GM10248 (cell line): ENCODE measurements at regions of chr18 and their contacts with region 1.

Region 1: GRCh38 chr18:49041435-49042245 is 90.9 kb upstream of the SMAD7 start:
- DNase-seq: no peak
- CTCF ChIP-seq: peak; percentile 39

Region 2: DNA sequence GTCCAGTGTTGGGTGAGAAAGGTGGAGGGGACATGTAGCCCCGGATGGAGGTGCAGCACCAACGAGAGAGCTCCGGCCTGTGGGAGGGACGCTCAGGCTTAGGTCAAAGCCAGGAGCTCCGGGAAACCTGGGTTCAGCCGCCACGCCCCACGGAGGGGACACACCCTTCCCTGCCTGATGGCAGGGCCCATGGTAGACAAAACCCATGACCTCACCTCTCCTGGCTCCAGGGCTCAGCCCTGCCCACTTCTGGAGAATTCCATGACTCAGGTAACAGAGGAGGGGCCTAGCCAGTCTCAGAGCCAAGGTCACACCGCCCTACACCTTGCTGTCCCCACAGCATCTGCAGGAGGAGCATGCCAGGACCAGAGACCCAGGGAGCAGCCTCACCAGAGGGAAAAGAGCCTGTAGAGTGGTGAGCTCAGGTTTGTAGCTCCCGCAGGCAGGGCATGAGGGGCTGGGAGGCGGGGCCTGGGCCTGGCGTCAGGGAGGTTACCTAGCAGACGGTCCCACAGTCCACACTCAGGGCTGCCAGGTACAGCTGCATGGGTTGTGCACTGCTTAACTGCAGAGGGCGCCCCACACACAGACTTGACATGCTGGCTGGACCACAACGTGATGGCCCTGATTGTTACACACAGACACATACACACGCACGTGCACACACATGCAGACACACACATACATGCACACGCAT is 20.1 kb before region 1 on chr18:
- CTCF ChIA-PET with region 1: interaction called, 17 read pairs
- POLR2A ChIA-PET with region 1: no interaction called
- DNase-seq: peak; percentile 70
- CTCF ChIP-seq: peak; percentile 51

Region 3: DNA sequence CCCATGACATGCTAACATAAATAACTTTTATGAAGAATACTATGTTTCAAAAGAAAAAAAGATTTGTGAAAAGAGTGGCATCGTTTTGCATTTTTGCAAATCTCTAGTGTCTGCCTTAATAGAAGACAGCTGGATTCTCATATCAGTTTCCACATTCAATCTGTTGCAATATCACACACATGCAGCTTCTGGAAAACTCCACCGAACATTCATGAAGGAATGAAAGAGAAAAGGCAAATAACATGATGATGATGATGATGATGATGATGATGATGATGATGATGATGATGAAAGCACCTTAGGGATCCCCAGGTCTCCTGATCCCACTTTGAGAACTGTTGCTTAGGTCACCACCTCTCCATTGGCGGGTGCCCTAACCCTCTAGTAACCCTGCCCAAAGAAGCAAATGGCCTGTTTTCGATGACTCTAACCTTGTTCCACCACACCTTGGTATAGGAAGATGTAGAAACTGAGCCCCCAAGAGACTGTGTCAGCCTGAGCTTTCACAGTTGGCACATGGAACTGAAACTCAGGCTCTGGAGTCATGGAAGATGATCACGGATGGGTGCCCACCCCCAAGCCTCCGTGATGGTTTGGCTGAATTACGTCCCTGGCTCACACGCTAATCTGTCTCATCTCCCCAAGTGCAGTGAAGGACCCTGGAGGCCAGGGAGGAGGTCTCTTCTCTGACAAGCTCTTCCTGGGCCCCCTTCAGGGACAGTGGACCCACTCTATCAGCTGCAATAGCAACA is 10.8 kb before region 1 on chr18:
- CTCF ChIA-PET with region 1: interaction called, 17 read pairs
- POLR2A ChIA-PET with region 1: no interaction called
- DNase-seq: no peak
- CTCF ChIP-seq: no peak

Region 4: GRCh38 chr18:49052891-49053644 is 11.4 kb after region 1 on chr18:
- CTCF ChIA-PET with region 1: interaction called, 29 read pairs
- POLR2A ChIA-PET with region 1: no interaction called
- DNase-seq: no peak
- CTCF ChIP-seq: no peak

Region 5: DNA sequence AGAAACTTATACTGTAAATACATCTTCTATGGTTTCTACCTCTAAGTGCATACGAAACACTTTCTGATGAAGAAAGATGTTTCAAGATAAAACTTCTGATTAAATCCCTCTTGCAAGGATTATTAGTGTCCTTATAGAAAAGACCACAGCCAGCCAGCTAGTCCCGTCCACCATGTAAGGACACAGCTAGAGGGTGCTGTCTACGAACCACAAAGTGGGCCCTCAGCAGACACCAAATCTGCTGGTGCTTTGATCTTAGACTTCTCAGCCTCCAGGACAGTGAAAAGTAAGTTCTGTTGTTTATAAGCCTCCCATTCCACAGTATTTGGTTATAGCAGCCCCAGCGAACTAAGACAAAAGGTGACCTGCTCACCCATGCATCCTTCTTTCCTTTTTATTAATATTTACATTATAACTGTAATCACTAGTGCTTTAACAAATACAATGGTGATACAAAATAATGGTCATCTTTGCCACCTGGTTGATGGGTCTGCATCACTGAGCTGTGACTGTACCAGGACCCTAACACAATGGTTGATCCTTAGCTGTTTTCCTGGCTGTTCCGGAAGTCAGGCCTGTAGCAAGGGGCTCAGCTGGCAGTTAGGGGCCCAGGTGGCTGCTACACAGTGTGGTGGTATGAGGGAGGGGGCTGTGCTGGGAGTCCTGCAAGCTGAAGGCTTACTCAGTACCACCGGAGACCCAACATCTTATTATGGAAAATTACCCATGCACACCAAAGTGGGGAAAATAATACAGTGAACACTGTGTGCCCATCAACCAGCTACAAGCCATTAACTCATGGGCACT is 17.6 kb after region 1 on chr18:
- CTCF ChIA-PET with region 1: interaction called, 10 read pairs
- POLR2A ChIA-PET with region 1: no interaction called
- DNase-seq: no peak
- CTCF ChIP-seq: peak; percentile 17